Calu3 (cell line): ENCODE measurements at regions of chr2 and their contacts with region 1.

Region 1: GRCh38 chr2:98952966-98953365 is 16.9 kb upstream of the CRACDL start:
- DNase-seq: no peak
- H3K4me3 Mint-ChIP-seq: no peak overlapping the region
- H3K27ac Mint-ChIP-seq: no peak overlapping the region
- H3K4me1 Mint-ChIP-seq: peaks cover 9% of the 10 kb centered on the region
- H3K27me3 Mint-ChIP-seq: peaks cover 13% of the 10 kb centered on the region
- CTCF ChIP-seq: no peak

Region 2: DNA sequence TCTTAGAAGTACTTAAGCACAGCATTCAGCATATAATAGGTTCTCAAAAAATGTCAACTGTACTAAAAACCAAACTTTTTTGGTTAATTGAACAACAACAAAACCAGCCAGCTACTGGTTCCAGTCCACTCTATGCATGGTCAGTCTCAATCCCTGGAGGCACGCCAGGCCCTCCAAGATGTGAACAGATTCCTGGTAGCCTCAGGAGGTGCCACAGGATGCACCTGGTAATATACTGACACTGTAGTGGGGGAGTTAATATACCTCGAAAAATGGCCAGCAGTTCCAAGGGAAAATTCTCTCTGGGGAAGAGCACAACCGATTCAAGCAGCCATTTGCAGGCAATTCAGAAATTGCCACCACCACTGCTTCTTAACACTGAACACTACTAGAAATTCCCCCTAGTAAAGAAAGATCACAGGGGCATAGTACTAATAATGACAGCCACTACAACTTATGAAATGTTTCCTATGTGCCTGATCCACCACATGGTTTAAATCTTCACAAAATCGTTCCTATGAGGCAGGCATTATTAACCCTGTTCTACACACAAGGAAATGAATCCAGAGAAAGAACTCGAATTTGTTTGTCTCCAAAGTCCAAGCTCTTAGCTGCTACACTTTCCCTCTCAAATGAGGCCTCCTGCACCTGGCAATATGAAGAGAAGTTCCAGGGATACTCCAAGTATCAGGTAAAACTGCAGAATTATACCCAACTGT is 225.4 kb before region 1 on chr2:
- CTCF ChIA-PET with region 1: no interaction called
- intact Hi-C with region 1: no loop called
- DNase-seq: no peak
- H3K4me3 Mint-ChIP-seq: no peak overlapping the region
- H3K27ac Mint-ChIP-seq: no peak overlapping the region
- H3K4me1 Mint-ChIP-seq: peaks cover 4% of the 10 kb centered on the region
- H3K27me3 Mint-ChIP-seq: no peaks in the 10 kb centered on the region
- CTCF ChIP-seq: no peak

Region 3: DNA sequence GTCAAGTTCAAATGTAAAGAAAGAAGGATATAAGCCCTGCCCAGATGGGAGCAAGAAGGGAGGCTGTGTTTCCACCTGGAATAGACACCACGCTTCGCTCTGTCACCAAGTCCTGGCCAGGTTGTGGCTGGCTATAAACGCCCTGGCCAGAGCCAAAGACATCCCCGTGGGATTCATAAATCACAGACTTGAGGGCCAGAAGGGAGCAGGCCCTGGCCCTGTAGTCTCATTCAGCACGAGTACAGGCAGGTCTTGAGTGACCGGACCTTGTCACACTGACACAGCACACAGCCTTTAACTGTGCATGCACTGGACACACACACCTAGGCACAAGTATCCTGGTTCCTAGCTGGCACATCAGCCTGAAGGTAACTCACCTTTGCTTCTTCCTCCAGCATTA is 127.6 kb before region 1 on chr2:
- CTCF ChIA-PET with region 1: no interaction called
- intact Hi-C with region 1: no loop called
- DNase-seq: no peak
- H3K4me3 Mint-ChIP-seq: no peak overlapping the region
- H3K27ac Mint-ChIP-seq: no peak overlapping the region
- H3K4me1 Mint-ChIP-seq: no peaks in the 10 kb centered on the region
- H3K27me3 Mint-ChIP-seq: no peaks in the 10 kb centered on the region
- CTCF ChIP-seq: no peak

Region 4: DNA sequence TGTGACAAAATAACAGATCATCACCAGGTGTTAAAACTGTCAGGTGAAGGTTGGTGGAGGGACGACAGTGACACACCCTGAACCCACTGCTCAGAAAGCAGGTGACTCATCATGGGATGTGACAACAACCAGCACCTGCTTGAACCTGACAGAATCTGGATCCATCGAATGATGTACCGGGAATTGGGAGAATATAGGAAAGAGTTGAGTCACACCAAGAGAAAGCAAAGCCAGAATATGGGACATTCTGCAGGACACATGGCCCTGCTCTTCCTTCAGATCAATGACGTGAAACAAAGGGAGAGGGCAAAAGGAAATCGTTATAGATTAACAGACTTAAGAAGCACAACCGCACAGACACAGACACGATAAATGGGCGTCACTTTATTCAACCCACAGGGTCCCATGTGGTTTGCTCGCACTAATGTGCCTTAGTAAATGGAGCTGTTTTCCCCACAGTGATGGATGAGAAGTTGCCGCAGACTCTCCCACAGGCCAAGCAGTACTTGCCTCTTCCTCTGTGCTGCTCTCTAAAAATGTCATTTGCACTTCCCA is 117.1 kb before region 1 on chr2:
- CTCF ChIA-PET with region 1: no interaction called
- intact Hi-C with region 1: no loop called
- DNase-seq: no peak
- H3K4me3 Mint-ChIP-seq: no peak overlapping the region
- H3K27ac Mint-ChIP-seq: no peak overlapping the region
- H3K4me1 Mint-ChIP-seq: peaks cover 8% of the 10 kb centered on the region
- H3K27me3 Mint-ChIP-seq: no peaks in the 10 kb centered on the region
- CTCF ChIP-seq: no peak

Region 5: GRCh38 chr2:98985905-98986666 is 33.1 kb after region 1 on chr2:
- CTCF ChIA-PET with region 1: no interaction called
- intact Hi-C with region 1: loop called (anchors 2 kb)
- DNase-seq: no peak
- H3K4me3 Mint-ChIP-seq: no peak overlapping the region
- H3K27ac Mint-ChIP-seq: no peak overlapping the region
- H3K4me1 Mint-ChIP-seq: no peaks in the 10 kb centered on the region
- H3K27me3 Mint-ChIP-seq: no peaks in the 10 kb centered on the region
- CTCF ChIP-seq: no peak

Region 6: DNA sequence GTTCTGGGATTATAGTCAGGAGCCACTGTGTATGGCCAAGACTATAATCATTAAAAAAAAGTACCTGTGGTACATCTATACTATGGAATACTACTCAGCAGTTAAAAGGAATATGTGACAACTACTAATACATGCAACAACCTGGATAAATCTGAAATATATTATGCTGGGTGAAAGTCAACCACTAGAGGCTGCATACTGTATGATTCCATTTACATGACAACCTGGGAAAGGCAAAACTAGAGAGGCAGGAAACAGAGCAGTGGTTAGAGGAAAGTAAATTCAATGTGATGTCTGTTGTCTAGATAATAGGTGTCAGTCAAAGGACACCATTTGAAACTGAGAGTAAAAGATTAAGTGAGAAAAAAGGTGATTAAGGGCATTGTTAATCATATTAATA is 46.2 kb after region 1 on chr2:
- CTCF ChIA-PET with region 1: no interaction called
- intact Hi-C with region 1: no loop called
- DNase-seq: no peak
- H3K4me3 Mint-ChIP-seq: no peak overlapping the region
- H3K27ac Mint-ChIP-seq: no peak overlapping the region
- H3K4me1 Mint-ChIP-seq: no peaks in the 10 kb centered on the region
- H3K27me3 Mint-ChIP-seq: peaks cover 11% of the 10 kb centered on the region
- CTCF ChIP-seq: no peak